Mammary epithelial cell (primary cell): ENCODE measurements at regions of chr7 and their contacts with region 1.

Region 1: GRCh38 chr7:121994625-121995410 is 121.9 kb downstream of the PTPRZ1 start:
- DNase-seq: peak; percentile 69
- H3K4me3 ChIP-seq: no peak overlapping the region
- H3K27ac ChIP-seq: no peak overlapping the region
- H3K4me1 ChIP-seq: no peaks in the 10 kb centered on the region
- H3K27me3 ChIP-seq: no peaks in the 10 kb centered on the region
- CTCF ChIP-seq: peak; percentile 82 to 93

Region 2: DNA sequence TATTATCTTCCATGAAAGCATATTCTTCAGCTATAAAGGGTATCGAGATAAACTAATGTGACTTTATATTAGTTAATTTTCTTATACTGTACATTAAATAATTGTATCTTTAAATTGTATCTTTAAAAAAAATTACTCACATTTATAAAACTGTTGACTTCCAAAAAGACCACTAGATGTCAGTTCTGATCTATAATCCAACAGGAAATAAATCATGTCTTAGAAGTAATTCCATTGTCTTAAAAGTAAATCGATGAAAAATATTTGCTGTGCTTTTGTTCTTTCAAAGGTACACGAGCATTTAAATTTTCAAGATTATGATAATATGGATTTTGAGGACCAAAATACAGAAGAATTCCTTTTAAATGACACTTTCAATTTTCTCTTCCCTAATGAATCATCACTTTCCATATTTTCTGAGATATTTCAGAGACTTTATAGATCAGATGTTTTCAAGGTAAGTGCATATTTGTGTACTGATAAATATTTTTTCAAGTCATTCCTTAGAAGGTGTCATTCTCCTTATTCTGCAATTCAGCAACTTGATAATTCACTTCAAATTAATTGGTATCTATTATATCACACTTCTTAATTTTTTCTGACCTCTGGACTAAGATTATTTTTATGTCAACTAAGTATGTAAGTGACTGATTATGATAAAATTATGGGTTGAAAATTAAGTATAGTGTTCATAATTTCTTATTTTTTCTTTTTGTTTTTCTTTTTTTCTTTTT is 867.9 kb before region 1 on chr7:
- CTCF ChIA-PET with region 1: no interaction called
- dilution Hi-C with region 1: no loop called
- in situ Hi-C with region 1: no loop called
- intact Hi-C with region 1: loop called (anchors 5 kb)
- DNase-seq: no peak
- H3K4me3 ChIP-seq: no peak overlapping the region
- H3K27ac ChIP-seq: no peak overlapping the region
- H3K4me1 ChIP-seq: no peaks in the 10 kb centered on the region
- H3K27me3 ChIP-seq: no peaks in the 10 kb centered on the region
- CTCF ChIP-seq: peak; percentile 37

Region 3: GRCh38 chr7:121605317-121605680 is 389.5 kb before region 1 on chr7:
- CTCF ChIA-PET with region 1: interaction called, 11 read pairs
- dilution Hi-C with region 1: no loop called
- in situ Hi-C with region 1: loop called (anchors 10 kb)
- intact Hi-C with region 1: loop called (anchors 1 kb)
- DNase-seq: peak; percentile 46
- H3K4me3 ChIP-seq: no peak overlapping the region
- H3K27ac ChIP-seq: no peak overlapping the region
- H3K4me1 ChIP-seq: peaks cover 12% of the 10 kb centered on the region
- H3K27me3 ChIP-seq: no peaks in the 10 kb centered on the region
- CTCF ChIP-seq: peak; percentile 32 to 68

Region 4: GRCh38 chr7:121744319-121744718 is 250.5 kb before region 1 on chr7:
- CTCF ChIA-PET with region 1: no interaction called
- dilution Hi-C with region 1: no loop called
- in situ Hi-C with region 1: loop called in 1 of 2 experiments (anchors 25 kb)
- intact Hi-C with region 1: no loop called
- DNase-seq: peak; percentile 91
- H3K4me3 ChIP-seq: no peak overlapping the region
- H3K27ac ChIP-seq: peak overlapping the region; percentile 94
- H3K4me1 ChIP-seq: peaks cover 44% of the 10 kb centered on the region
- H3K27me3 ChIP-seq: no peaks in the 10 kb centered on the region
- CTCF ChIP-seq: no peak

Region 5: DNA sequence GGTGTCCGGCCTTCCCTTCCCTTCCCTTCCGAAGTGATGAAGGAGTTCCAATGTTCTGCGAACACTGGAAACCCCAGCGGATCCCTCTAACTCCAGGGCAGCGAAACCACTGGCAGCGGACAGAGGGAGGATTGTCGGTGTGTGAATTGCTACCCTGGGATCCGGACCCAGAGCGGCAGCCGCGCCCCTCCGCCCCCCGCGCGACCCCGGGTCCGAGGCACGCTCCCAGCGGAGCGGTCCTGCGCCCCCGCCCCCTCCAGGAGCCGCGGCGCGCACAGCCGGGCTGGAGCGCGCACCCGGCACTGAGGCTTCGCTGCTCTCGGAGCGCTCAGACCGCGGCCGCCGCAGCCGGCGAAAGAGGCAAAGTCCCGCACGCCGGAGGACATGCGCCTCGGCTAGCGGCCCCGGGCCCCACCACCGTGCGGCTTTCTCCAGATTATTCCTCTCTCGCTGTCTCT is 122.0 kb before region 1 on chr7 and contains the start of gene PTPRZ1:
- CTCF ChIA-PET with region 1: interaction called, 4 read pairs
- dilution Hi-C with region 1: loop called (anchors 25 kb)
- in situ Hi-C with region 1: no loop called
- intact Hi-C with region 1: loop called (anchors 1 kb)
- DNase-seq: no peak
- H3K4me3 ChIP-seq: peak within 1 kb of the TSS; percentile 86 to 98 (median 89)
- H3K27ac ChIP-seq: peak within 1 kb of the TSS; percentile 49
- H3K4me1 ChIP-seq: peaks cover 8% of the 10 kb centered on the region
- H3K27me3 ChIP-seq: no peaks in the 10 kb centered on the region
- CTCF ChIP-seq: no peak
- total RNA-seq, gene PTPRZ1: 6.2 to 46.1 TPM

Region 6: GRCh38 chr7:121961089-121961867 is 33.5 kb before region 1 on chr7:
- CTCF ChIA-PET with region 1: interaction called, 13 read pairs
- dilution Hi-C with region 1: no loop called
- in situ Hi-C with region 1: no loop called
- intact Hi-C with region 1: no loop called
- DNase-seq: peak; percentile 93
- H3K4me3 ChIP-seq: no peak overlapping the region
- H3K27ac ChIP-seq: peak overlapping the region; percentile 99
- H3K4me1 ChIP-seq: peaks cover 10% of the 10 kb centered on the region
- H3K27me3 ChIP-seq: no peaks in the 10 kb centered on the region
- CTCF ChIP-seq: peak; percentile 25 to 47

Region 7: DNA sequence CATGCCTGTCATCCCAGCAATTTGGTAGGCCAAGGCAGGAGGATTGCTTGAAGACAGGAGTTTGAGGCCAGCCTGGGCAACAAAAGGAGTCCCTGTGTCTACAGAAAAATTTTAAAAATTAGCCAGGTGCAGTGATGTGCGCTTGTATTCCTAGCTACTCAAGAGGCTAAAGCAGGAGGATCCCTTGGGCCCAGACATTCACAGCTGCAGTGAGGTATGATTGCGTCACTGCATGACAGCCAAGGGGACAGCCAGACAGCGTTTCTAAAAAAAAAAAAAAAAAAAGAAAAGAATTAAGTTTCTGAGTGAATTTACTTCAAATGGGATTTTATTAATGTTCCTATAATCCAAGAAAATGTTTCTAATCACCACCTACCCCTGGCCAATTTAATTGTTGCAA is 795.3 kb after region 1 on chr7:
- CTCF ChIA-PET with region 1: no interaction called
- dilution Hi-C with region 1: no loop called
- in situ Hi-C with region 1: no loop called
- intact Hi-C with region 1: no loop called
- DNase-seq: no peak
- H3K4me3 ChIP-seq: no peak overlapping the region
- H3K27ac ChIP-seq: no peak overlapping the region
- H3K4me1 ChIP-seq: no peaks in the 10 kb centered on the region
- H3K27me3 ChIP-seq: no peaks in the 10 kb centered on the region
- CTCF ChIP-seq: no peak